Mammary epithelial cell (primary cell): ENCODE measurements at regions of chr9 and their contacts with region 1.

Region 1: DNA sequence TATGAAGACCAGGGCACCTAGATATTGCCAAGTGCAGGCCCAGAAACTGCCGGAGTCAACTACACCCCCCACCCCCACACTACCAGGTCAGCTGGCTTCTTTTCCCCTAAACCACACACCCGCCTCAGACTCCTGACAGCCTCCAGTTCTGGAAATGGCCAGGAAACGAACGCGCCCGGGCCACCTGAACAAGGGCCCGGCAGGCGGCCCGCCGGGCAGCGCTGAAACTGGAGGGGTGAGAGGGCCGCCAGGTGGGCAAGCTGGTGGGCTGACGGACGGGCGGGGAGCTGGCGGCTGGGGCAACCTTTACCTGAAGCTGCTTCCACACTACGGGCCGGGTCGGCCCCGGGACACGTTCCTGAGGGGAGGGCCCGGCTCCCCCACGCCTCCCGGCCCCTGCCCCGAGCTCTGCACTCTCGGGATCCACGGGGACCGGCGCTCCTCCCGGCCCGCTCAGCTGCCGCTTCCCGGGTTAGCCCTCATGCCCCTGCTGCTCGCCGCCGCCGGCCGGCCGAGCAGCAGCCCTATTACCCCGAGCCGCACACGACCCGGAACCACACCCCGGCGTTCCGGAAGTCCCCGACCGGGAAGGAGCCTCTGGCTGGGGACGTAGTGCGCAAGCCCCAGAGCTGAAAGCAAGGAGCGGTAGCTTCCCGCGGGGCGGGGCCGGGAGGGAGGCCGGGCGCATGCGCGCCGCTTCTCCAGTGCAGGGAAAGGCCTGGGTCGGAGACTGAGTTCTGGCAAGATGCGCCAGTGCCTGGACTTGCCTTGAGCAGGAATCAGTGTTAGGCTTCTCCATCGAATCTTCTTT is at the start of gene MAPKAP1:
- DNase-seq: peak; percentile 97
- H3K4me3 ChIP-seq: peak within 1 kb of the TSS; percentile 78 to 88 (median 84)
- H3K27ac ChIP-seq: peak within 1 kb of the TSS; percentile 67
- H3K4me1 ChIP-seq: peaks cover 19% of the 10 kb centered on the region
- H3K27me3 ChIP-seq: no peaks in the 10 kb centered on the region
- CTCF ChIP-seq: no peak
- total RNA-seq, gene MAPKAP1: 81.4 to 104 TPM

Region 2: DNA sequence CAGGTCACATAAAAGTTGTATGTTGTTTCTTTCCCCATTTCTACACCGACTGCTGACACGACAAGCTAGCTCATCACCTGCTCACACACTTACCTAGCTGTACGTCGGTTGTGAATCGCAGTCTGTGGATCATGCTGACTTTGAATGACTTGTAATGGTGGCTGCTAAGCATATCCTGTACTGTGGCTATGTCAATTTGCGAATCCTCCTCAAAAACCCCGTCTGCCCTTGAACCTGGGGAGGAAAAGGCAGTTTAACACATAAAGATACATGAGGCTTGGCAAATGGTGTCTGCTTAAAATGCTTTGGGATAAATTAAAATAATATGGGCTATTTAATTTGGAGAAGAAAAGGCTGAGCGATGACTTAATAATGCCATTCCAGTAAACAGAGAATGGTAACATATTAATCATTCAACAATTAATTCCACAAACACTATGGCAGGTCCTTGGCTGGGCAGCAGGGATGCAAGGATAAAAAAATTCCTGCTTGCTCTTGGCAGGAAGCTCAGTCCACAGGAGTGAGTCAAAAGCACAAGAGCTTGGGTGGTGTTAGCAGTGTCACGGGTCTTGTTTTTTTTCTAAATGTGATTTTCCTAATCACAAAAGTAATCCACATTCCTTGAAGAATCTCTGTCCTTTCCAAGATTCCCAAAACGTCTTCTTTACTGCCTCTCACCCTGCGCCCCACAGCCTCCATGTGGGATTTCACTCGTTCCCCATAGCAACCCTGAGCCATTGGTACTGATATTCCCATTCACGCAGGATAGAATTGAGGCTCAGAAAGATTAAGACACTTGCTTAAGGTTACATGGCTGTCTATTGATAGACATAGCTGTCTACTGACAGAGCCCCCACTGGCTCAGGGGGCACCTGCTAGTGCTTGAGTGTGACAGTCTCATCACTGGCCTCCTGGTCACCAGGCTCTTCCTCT is 222.2 kb before region 1 on chr9:
- CTCF ChIA-PET with region 1: no interaction called
- dilution Hi-C with region 1: no loop called
- in situ Hi-C with region 1: no loop called
- intact Hi-C with region 1: no loop called
- DNase-seq: peak; percentile 17
- H3K4me3 ChIP-seq: no peak overlapping the region
- H3K27ac ChIP-seq: no peak overlapping the region
- H3K4me1 ChIP-seq: no peaks in the 10 kb centered on the region
- H3K27me3 ChIP-seq: no peaks in the 10 kb centered on the region
- CTCF ChIP-seq: no peak

Region 3: DNA sequence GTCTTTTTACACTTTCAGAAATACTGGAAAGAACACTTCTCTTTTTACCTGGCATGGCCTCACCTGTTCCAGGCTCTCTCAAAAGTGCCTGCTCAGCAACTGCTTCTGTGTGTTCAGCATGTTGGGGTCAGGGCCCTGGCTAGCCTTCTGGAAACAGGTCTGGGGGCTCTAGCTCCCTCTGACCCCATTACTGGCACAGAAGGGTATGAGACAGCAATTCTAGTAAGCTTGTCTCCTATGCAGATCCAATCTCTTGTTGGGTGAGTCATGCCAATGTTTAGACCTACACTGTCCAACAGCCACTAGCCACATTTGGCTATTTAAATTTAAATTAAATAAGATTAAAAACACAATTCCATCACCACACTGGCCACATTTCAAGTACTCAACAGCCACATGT is 80.7 kb before region 1 on chr9:
- CTCF ChIA-PET with region 1: no interaction called
- dilution Hi-C with region 1: loop called (anchors 5 kb)
- in situ Hi-C with region 1: no loop called
- intact Hi-C with region 1: no loop called
- DNase-seq: no peak
- H3K4me3 ChIP-seq: no peak overlapping the region
- H3K27ac ChIP-seq: no peak overlapping the region
- H3K4me1 ChIP-seq: peaks cover 12% of the 10 kb centered on the region
- H3K27me3 ChIP-seq: no peaks in the 10 kb centered on the region
- CTCF ChIP-seq: no peak

Region 4: GRCh38 chr9:125739436-125739835 is 32.6 kb after region 1 on chr9:
- CTCF ChIA-PET with region 1: no interaction called
- dilution Hi-C with region 1: no loop called
- in situ Hi-C with region 1: no loop called
- intact Hi-C with region 1: no loop called
- DNase-seq: no peak
- H3K4me3 ChIP-seq: no peak overlapping the region
- H3K27ac ChIP-seq: no peak overlapping the region
- H3K4me1 ChIP-seq: no peaks in the 10 kb centered on the region
- H3K27me3 ChIP-seq: peaks cover 2% of the 10 kb centered on the region
- CTCF ChIP-seq: no peak

Region 5: GRCh38 chr9:125794708-125795107 is 87.8 kb after region 1 on chr9:
- CTCF ChIA-PET with region 1: no interaction called
- dilution Hi-C with region 1: no loop called
- in situ Hi-C with region 1: no loop called
- intact Hi-C with region 1: no loop called
- DNase-seq: no peak
- H3K4me3 ChIP-seq: no peak overlapping the region
- H3K27ac ChIP-seq: no peak overlapping the region
- H3K4me1 ChIP-seq: no peaks in the 10 kb centered on the region
- H3K27me3 ChIP-seq: no peaks in the 10 kb centered on the region
- CTCF ChIP-seq: no peak

Region 6: DNA sequence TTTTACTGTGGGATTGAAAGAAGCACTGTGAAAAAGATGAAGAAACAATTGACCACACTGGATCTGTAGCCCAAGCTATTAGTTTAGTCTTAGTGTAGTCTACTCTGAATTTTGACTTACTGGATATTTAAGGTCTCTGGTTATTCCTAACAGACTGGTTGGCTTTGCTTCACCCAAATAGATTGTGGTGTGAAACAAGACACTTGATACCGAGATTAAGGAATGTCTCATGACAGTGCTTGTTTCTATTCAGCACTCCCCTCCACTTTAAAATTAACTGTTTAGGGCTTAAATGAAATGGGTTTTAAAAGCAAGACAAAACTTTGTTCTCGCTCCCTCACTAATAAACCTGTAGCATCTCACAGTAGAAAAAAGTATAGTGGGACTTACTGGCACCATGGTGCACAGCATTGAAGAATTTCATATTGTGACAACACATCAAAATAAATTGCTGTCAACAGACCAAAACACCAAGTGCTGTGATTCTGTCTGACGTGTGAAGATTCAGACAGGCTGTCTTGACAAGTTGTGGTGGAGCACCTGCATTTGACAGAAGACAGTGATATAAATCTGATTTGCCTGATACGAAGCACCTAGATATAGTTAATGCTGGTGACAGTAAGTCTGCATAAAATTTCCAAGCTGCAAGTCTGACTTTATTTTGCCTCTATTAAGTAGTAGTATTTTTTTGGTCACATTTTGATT is 113.4 kb after region 1 on chr9:
- CTCF ChIA-PET with region 1: no interaction called
- dilution Hi-C with region 1: no loop called
- in situ Hi-C with region 1: no loop called
- intact Hi-C with region 1: loop called (anchors 5 kb)
- DNase-seq: no peak
- H3K4me3 ChIP-seq: no peak overlapping the region
- H3K27ac ChIP-seq: no peak overlapping the region
- H3K4me1 ChIP-seq: peaks cover 9% of the 10 kb centered on the region
- H3K27me3 ChIP-seq: no peaks in the 10 kb centered on the region
- CTCF ChIP-seq: no peak

Region 7: DNA sequence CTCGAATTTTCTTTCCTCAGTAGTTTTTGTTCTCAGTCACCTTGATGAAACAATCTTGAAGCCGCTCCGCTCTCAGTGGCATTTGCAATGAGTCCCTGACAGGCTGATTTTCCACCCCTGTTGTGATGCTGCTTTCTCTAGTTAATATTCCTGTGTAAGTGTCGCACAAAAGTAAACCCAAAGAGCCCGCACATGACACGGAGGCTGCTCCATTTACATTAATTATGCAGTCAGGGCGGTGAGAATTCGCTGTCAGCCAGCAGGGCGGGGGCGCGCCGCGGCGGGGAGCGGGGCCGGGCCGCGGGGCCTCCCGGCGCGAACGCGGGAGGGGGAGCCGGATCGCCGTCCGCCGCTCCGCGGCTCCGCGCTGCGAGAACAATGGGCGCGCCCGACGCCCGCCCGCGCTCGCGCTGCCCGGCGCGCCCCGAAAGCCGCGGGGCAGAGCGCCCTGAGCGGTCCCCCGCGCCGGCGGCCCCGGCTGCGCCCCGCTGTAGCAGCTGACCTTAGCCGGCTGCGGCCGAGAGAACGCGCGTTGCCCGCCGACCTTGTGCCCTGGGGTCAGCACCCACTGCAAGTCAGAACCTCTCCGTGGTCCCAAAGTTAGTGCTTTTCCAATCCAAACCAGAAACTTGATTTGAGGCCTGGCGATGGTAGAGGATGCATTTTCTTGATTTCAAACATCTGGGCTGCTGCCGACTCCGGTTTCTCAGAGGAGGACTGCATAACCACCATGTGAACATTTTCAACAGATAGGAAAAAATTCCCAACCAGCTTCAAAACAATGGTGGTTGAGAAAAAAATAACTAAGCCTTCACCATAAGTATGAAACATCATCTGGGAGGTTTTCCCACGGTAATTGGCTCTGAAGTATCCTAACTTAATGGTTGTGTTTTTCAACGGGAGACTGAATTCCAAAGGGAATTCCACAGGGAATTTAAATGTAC is 182.9 kb after region 1 on chr9:
- CTCF ChIA-PET with region 1: no interaction called
- dilution Hi-C with region 1: no loop called
- in situ Hi-C with region 1: no loop called
- intact Hi-C with region 1: loop called (anchors 5 kb)
- DNase-seq: peak; percentile 52
- H3K4me3 ChIP-seq: peak overlapping the region; percentile 61 to 75 (median 61)
- H3K27ac ChIP-seq: peak overlapping the region; percentile 83
- H3K4me1 ChIP-seq: peaks cover 27% of the 10 kb centered on the region
- H3K27me3 ChIP-seq: no peaks in the 10 kb centered on the region
- CTCF ChIP-seq: no peak